Right ventricle myocardium inferior (tissue), 1 donor: ENCODE measurements at regions of chr16 and their contacts with region 1.

Region 1: DNA sequence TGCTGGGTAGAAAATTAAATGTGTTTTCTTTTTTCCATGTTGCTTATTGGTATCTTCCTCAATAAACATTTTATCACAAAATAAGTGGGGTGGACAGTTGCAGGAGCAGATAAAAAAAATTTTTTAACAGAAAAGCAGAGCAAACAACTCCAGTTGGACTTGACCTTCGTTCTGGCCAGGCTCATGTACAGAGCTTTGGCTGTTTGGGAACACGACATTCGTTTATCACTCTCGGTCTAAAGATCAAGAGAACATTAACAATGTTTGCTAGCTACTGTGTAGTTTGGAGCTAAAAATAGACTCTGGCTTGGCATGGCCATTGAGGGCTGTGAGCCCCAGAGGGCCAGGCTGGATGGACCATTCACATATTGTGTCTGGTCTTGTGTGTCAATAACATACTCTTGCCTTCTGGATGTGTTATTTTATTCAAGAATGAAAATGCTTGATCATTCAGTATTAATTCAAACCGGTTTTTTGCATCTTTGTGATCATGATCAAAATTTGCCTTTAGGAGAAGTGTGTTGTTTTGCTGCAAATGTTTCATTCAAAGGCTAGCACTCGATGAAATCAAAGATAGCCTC is 56.6 kb downstream of the TMEM186 start:
- DNase-seq: no peak
- ATAC-seq: peak; percentile 83

Region 2: GRCh38 chr16:8685994-8686621 is 54.8 kb before region 1 on chr16:
- intact Hi-C with region 1: loop called (anchors 5 kb)
- DNase-seq: peak; percentile 73
- ATAC-seq: peak; percentile 90